Esophagus squamous epithelium (tissue), 5 donors: ENCODE measurements at regions of chr6 and their contacts with region 1.

Region 1: GRCh38 chr6:13715444-13715883 is 3.8 kb upstream of the RANBP9 start:
- DNase-seq: no peak
- H3K4me3 ChIP-seq: no peak overlapping the region
- H3K27ac ChIP-seq: no peak overlapping the region
- H3K4me1 ChIP-seq: peaks cover 0 to 24% (median 3%) of the 10 kb centered on the region in 3 donors
- H3K27me3 ChIP-seq: no peaks in the 10 kb centered on the region
- CTCF ChIP-seq: no peak
- POLR2A ChIP-seq: no peak

Region 2: DNA sequence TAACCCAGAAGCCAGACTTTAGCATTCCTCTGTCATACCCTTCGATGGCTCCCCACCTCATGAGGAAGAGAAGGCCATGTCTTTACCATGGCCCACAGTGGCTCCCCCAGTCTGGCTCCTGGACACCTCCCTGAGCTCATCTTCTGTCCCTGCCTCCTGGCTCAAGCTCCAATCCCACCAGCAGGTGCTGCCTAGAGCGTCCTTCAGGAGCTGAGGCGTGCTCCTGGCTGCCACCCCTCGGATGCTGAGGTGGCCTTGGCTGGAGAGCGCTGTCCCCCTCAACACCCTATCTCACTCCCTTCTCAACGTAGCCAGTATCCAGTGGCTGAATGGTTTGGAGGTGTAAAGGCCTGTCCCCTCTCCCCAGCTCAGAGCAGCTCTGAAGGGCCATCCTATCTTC is 43.6 kb after region 1 on chr6:
- intact Hi-C with region 1: loop called (anchors 5 kb)
- DNase-seq: no peak
- H3K4me3 ChIP-seq: no peak overlapping the region
- H3K27ac ChIP-seq: peak overlapping the region in 3 of 4 donors; percentile 84 to 89 (median 87)
- H3K4me1 ChIP-seq: peaks cover 24 to 80% (median 35%) of the 10 kb centered on the region in 3 donors
- H3K27me3 ChIP-seq: no peaks in the 10 kb centered on the region
- CTCF ChIP-seq: no peak
- POLR2A ChIP-seq: no peak

Region 3: GRCh38 chr6:13838616-13839015 is 123.2 kb after region 1 on chr6:
- intact Hi-C with region 1: no loop called
- DNase-seq: no peak
- H3K4me3 ChIP-seq: no peak overlapping the region
- H3K27ac ChIP-seq: no peak overlapping the region
- H3K4me1 ChIP-seq: no peaks in the 10 kb centered on the region
- H3K27me3 ChIP-seq: no peaks in the 10 kb centered on the region
- CTCF ChIP-seq: no peak
- POLR2A ChIP-seq: no peak

Region 4: GRCh38 chr6:14075095-14075503 is 359.6 kb after region 1 on chr6:
- intact Hi-C with region 1: no loop called
- DNase-seq: no peak
- H3K4me3 ChIP-seq: peak overlapping the region; percentile 9 to 60 (median 32)
- H3K27ac ChIP-seq: peak overlapping the region; percentile 38 to 77 (median 66)
- H3K4me1 ChIP-seq: peaks cover 4 to 38% (median 10%) of the 10 kb centered on the region in 3 donors
- H3K27me3 ChIP-seq: no peaks in the 10 kb centered on the region
- CTCF ChIP-seq: no peak
- POLR2A ChIP-seq: no peak